Caco-2 (cell line): ENCODE measurements at regions of chr15 and their contacts with region 1.

Region 1: DNA sequence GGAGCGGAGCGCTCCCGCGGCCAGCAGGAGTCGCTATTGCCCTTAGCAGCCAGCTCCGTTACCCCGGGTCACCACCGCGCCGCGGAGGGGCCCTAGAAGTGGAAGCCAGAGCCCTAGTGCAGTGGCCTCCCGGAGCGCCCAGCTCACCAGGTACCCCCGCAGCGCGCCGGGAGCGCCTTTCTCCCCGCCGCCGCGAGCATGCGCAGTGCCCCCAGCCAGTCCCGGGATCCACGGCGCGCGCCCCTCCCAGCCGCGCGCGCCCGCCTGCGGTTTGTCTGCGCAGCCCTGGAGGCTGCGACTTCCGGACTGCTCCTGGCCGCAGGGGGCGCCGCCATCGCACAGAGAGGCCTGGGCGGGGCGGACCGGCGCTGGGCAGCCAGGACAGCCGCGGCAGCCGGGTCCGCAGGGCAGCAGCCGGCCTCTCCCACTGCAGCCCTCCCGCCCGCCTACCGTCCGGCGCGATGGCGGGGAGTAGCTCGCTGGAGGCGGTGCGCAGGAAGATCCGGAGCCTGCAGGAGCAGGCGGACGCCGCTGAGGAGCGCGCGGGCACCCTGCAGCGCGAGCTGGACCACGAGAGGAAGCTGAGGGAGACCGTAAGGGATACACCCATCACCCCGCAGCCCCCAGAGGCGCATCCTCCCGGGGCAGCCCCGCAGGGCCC is 5.7 kb downstream of the TPM1 start:
- DNase-seq: peak; percentile 95 to 97
- H3K4me3 ChIP-seq: peak overlapping the region; percentile 81
- H3K4me3 Mint-ChIP-seq: peak overlapping the region; percentile 90
- H3K27ac Mint-ChIP-seq: peak overlapping the region; percentile 90
- H3K4me1 ChIP-seq: peaks cover 64% of the 10 kb centered on the region
- H3K4me1 Mint-ChIP-seq: peaks cover 61% of the 10 kb centered on the region
- H3K27me3 ChIP-seq: no peaks in the 10 kb centered on the region
- H3K27me3 Mint-ChIP-seq: no peaks in the 10 kb centered on the region
- CTCF ChIP-seq: peak; percentile 78 to 91

Region 2: DNA sequence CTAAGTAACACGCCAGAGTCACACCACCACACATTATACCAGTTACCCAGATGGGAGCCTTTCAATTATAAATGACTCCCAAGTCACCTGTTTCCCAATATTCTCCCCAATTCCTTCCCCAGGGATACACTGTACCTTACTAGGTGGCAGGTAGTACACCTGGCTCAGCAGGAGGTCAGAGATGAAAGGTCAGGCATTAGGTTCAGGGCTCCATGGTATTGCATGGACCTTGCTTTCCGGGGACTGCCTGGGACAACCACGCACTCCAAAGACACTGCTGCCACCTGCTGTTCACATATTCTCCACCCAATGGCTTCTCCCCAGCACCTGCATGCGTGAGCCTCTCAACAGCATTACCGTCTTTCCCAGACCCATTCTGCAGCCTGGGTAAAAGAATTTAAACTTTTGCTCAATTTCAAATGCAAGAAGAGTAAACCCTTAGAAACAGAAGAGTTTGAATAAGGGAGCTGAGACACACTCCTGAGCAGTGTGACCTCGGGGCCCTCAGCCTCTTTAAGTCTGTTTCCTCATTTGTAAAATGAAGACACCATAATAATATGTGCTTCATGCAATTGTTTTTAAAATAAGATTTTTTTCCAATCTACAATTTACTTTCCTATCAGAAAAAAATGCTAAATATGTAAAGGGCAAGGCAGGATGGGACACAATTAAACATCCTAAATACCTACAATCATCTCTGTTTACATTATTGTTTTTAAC is 45.4 kb after region 1 on chr15:
- CTCF ChIA-PET with region 1: interaction called, 17 read pairs
- POLR2A ChIA-PET with region 1: interaction called, 9 read pairs
- intact Hi-C with region 1: loop called (anchors 1 kb)
- DNase-seq: peak; percentile 86 to 88
- H3K4me3 ChIP-seq: no peak overlapping the region
- H3K4me3 Mint-ChIP-seq: no peak overlapping the region
- H3K27ac Mint-ChIP-seq: no peak overlapping the region
- H3K4me1 ChIP-seq: peaks cover 6% of the 10 kb centered on the region
- H3K4me1 Mint-ChIP-seq: peaks cover 15% of the 10 kb centered on the region
- H3K27me3 ChIP-seq: no peaks in the 10 kb centered on the region
- H3K27me3 Mint-ChIP-seq: no peaks in the 10 kb centered on the region
- CTCF ChIP-seq: peak; percentile 77 to 82

Region 3: GRCh38 chr15:63126726-63127125 is 78.5 kb after region 1 on chr15:
- CTCF ChIA-PET with region 1: no interaction called
- POLR2A ChIA-PET with region 1: no interaction called
- intact Hi-C with region 1: no loop called
- DNase-seq: no peak
- H3K4me3 ChIP-seq: no peak overlapping the region
- H3K4me3 Mint-ChIP-seq: no peak overlapping the region
- H3K27ac Mint-ChIP-seq: no peak overlapping the region
- H3K4me1 ChIP-seq: 0 out of 2 replicates have a peak, but pooled peaks cover 4% of the 10 kb centered on the region
- H3K4me1 Mint-ChIP-seq: no peaks in the 10 kb centered on the region
- H3K27me3 ChIP-seq: no peaks in the 10 kb centered on the region
- H3K27me3 Mint-ChIP-seq: no peaks in the 10 kb centered on the region
- CTCF ChIP-seq: no peak

Region 4: DNA sequence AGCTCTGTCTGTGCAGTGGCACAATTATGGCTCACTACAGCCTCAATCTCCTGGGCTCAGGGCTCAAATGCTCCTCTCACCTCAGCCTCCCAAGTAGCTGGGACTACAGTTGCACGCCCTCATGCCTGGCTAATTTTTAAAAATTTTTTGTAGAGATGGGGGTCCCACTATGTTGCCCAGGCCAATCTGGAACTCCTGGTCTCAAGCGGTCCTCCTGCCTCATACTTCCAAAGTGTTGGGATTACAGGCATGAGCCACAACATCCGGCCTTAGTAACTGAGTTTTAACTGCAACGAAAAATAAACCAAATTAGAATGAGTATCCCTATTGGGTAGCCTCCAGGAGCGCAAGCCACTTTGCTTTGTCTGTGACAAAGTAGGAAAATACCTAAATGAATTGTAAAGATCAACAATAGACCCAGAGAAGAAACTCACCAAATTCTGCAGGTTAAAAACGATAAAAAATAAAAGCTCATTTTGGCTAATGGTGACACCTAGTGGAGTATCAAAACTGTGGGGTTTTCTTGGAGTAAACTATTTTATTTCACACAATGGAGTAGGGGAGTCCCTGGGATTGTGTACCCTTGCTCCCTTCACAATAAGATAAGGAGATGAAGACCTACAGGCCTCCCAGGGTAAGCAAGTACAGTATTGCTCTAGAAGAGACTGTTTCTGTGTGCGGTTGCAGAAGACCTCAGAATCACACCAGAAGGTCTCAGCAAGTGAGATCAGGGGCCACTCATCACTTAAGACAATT is 354.4 kb after region 1 on chr15:
- CTCF ChIA-PET with region 1: no interaction called
- POLR2A ChIA-PET with region 1: no interaction called
- intact Hi-C with region 1: loop called (anchors 10 kb)
- DNase-seq: peak in 1 of 2 experiments; percentile 32
- H3K4me3 ChIP-seq: no peak overlapping the region
- H3K4me3 Mint-ChIP-seq: no peak overlapping the region
- H3K27ac Mint-ChIP-seq: no peak overlapping the region
- H3K4me1 ChIP-seq: no peaks in the 10 kb centered on the region
- H3K4me1 Mint-ChIP-seq: no peaks in the 10 kb centered on the region
- H3K27me3 ChIP-seq: no peaks in the 10 kb centered on the region
- H3K27me3 Mint-ChIP-seq: no peaks in the 10 kb centered on the region
- CTCF ChIP-seq: peak; percentile 54 to 65